Transverse colon (tissue), 4 donors: ENCODE measurements at regions of chr15 and their contacts with region 1.

Region 1: GRCh38 chr15:49977306-49977705 is 141.7 kb downstream of the ATP8B4 start:
- DNase-seq: no peak
- H3K4me3 ChIP-seq: no peak overlapping the region
- H3K27ac ChIP-seq: no peak overlapping the region
- H3K4me1 ChIP-seq: no peaks in the 10 kb centered on the region
- H3K27me3 ChIP-seq: no peaks in the 10 kb centered on the region
- CTCF ChIP-seq: no peak
- EP300 ChIP-seq: no peak
- POLR2A ChIP-seq: no peak

Region 2: DNA sequence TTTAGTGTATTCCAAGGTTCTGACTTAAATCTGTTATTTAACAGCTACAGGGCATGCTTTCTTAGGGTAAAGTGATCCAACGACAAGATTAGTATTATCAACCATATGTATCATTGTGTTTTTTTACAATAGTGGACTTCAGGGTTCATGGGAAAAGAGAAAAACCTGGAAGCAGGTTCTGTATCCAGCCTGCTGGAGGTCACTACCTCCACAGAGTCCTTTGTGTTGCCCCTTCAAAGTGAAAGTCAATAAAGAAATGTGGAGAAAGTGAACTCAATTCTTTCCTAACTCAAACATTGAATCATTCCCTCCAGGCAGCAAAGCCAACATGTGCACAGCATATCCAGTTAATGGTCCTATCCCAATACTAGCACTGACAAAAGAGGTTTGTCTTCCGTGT is 508.9 kb before region 1 on chr15:
- in situ Hi-C with region 1: no loop called
- intact Hi-C with region 1: no loop called
- DNase-seq: no peak
- H3K4me3 ChIP-seq: no peak overlapping the region
- H3K27ac ChIP-seq: peak overlapping the region in 3 of 4 donors; percentile 34 to 58 (median 53)
- H3K4me1 ChIP-seq: peaks cover 0 to 23% (median 0%) of the 10 kb centered on the region in 4 donors
- H3K27me3 ChIP-seq: no peaks in the 10 kb centered on the region
- CTCF ChIP-seq: no peak
- EP300 ChIP-seq: no peak
- POLR2A ChIP-seq: no peak

Region 3: GRCh38 chr15:49832511-49832910 is 144.8 kb before region 1 on chr15:
- in situ Hi-C with region 1: no loop called
- intact Hi-C with region 1: no loop called
- DNase-seq: peak; percentile 56
- H3K4me3 ChIP-seq: no peak overlapping the region
- H3K27ac ChIP-seq: no peak overlapping the region
- H3K4me1 ChIP-seq: no peaks in the 10 kb centered on the region
- H3K27me3 ChIP-seq: no peaks in the 10 kb centered on the region
- CTCF ChIP-seq: peak; percentile 25 to 54 (median 48)
- EP300 ChIP-seq: no peak
- POLR2A ChIP-seq: no peak

Region 4: DNA sequence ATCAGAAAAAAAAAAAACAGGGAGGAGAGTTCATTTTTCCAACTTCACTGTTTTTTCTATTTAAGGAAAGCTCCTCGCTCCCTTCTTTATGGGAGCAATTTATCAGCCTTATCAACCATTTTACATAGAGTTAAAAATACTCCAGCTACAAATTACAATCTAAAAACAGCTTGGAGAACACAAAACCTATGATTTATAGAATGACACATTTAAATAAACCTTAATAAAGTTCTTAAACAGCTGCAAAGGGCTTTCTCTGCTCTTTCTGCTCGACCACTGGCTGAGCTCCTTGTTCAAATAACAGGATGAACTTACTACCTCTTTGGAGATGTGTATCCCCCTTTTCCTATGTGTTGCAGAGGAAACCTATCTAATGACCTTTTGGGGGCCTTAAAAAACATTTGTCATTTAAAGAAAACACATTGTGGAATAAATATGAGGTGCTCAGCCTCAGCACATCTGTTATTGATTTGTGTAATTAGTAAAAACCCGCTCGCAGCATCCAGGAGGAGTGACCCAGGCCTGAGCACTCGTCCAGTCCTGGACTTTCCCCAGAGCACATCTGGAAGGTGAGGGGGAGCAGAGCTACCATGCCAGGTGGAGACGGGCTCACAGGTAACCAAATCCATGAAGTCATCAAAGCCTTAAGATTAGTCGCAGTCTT is 89.5 kb before region 1 on chr15:
- in situ Hi-C with region 1: no loop called
- intact Hi-C with region 1: no loop called
- DNase-seq: no peak
- H3K4me3 ChIP-seq: no peak overlapping the region
- H3K27ac ChIP-seq: peak overlapping the region; percentile 4 to 50 (median 28)
- H3K4me1 ChIP-seq: peaks cover 0 to 5% (median 0%) of the 10 kb centered on the region in 4 donors
- H3K27me3 ChIP-seq: no peaks in the 10 kb centered on the region
- CTCF ChIP-seq: no peak
- EP300 ChIP-seq: no peak
- POLR2A ChIP-seq: no peak

Region 5: DNA sequence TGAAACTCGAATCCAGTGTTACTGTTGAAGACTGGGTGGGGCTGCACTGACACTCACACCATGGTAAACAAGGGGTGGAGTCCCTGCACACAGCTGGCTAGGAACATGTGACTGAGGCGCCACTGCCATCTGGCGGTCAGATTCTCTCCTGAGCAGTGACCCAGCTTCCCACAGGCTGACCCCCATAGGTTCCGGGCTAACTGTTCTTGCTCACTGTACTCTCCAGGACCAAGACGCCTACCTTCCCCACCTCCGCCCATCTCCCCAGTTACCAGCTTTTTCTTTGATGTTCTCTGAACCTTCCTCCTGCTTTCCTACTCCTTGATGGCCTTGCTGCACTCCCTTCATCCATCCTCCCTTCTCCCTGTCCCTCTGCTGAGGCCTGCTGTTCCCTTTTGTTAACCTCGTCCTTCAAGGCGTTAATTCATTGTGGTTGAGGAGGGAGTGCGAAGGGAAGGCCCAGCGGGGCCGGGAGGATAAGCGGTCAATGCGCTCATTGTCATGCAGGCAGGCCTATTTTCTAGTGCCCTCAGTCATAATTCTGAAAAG is 26.6 kb after region 1 on chr15:
- in situ Hi-C with region 1: no loop called
- intact Hi-C with region 1: loop called (anchors 2 kb)
- DNase-seq: peak; percentile 88
- H3K4me3 ChIP-seq: no peak overlapping the region
- H3K27ac ChIP-seq: peak overlapping the region; percentile 20 to 48 (median 38)
- H3K4me1 ChIP-seq: peaks cover 3 to 8% (median 5%) of the 10 kb centered on the region in 4 donors
- H3K27me3 ChIP-seq: no peaks in the 10 kb centered on the region
- CTCF ChIP-seq: peak; percentile 64 to 80 (median 70)
- EP300 ChIP-seq: no peak
- POLR2A ChIP-seq: no peak

Region 6: GRCh38 chr15:50390554-50391287 is 413.4 kb after region 1 on chr15:
- in situ Hi-C with region 1: no loop called
- intact Hi-C with region 1: no loop called
- DNase-seq: no peak
- H3K4me3 ChIP-seq: no peak overlapping the region
- H3K27ac ChIP-seq: no peak overlapping the region
- H3K4me1 ChIP-seq: no peaks in the 10 kb centered on the region
- H3K27me3 ChIP-seq: no peaks in the 10 kb centered on the region
- CTCF ChIP-seq: no peak
- EP300 ChIP-seq: no peak
- POLR2A ChIP-seq: no peak